Mucosa of descending colon (tissue), 3 donors: ENCODE measurements at regions of chr4 and their contacts with region 1.

Region 1: DNA sequence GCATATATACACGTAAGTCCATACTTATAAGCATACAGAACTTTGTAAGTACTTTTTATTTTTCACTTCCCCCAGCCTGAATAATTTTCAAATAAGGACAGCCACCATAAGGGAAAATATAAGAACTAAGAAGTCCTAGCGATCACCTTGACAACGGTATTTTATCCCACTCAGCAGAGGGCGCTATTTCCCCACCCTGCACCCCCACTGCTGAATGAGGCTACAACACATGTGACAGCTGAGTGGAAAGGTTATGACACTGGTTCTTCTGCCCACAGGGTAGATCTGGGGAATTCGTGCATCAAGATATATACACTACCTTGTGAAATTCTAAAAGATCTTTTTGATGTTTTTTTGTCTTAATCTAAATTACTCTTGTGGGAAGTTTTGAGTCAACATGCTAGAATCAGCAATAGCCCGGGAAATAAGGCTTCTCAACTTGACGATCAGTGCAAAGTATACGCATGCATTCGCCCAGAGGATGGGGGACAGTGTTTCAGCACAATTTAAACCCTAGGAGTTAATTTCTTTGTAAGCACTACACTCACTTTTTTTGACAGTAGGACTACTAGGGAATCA is 151.5 kb downstream of the CORIN start:
- DNase-seq: peak in 2 of 3 donors; percentile 54 to 70
- ATAC-seq: peak; percentile 77
- H3K4me3 ChIP-seq: no peak overlapping the region
- H3K4me1 ChIP-seq: no peaks in the 10 kb centered on the region
- CTCF ChIP-seq: peak; percentile 12

Region 2: DNA sequence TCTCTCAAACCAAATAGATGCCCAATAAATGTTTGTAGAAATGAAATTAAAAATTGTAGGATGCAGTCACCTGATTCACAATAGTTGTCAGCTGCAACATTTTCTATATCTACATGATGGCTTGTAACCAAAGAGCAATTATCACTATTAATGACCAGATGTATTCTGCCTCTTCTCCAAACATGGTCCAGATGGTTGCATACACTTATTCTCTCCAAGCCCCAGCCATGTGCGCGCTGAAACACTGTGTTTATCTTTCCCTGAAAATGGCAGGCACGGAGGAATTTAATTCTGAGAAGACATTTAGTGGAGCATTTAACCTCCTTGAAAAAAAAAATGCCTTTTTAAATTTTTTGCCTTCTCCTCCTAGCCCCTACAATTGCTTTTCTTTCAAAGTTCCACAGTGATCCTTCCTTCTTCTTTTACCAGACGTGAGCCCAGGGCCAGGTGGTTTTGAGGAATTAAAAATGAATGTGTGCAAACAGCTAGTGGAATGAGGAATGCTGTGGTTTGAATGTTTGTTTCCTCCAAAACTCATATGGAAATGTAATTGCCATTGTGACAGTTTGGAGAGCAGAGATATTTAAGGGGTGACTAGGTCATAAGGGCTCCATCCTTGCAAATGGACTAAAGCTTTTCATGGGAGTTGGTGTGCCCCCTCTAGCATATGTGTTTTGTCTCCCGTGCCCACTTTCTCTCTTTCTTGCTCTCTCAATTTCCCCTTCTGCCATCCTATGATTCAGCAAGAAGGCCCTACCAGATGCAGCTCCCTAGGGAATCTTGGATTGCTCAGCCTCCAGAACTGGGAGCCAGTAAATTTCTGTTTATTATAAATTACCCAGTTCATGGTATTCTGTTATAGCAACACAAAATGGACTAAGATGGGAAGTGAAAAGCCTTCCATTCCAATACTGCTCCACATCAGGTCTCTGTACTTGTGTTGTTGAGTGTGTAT is 519.0 kb before region 1 on chr4:
- intact Hi-C with region 1: no loop called
- DNase-seq: no peak
- ATAC-seq: no peak
- H3K4me3 ChIP-seq: no peak overlapping the region
- H3K4me1 ChIP-seq: no peaks in the 10 kb centered on the region
- CTCF ChIP-seq: no peak

Region 3: DNA sequence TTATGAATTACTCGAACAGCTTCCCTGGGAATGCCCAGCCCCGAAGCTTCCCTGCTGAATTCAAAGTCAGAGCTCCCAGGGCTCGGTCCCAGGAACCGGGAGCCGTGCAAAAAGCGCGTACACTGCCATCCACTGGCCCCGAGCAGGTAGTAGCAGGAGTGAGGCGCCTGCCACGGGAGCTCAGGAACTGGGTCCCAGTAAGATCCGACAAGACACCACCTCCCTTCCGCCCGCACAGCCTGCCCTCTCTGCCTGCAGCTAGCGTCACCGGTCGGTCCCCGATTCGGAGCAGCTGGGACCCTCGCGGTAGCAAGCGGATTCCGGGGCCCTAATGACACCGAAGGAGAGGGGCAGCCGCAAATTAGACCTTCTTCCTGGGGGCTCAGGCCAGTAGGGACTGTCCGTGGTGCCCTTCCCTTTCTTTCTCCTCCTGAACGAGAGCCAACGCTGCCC is 150.3 kb after region 1 on chr4:
- intact Hi-C with region 1: loop called in 1 of 2 experiments (anchors 10 kb)
- DNase-seq: peak; percentile 77 to 83 (median 77)
- ATAC-seq: peak; percentile 95
- H3K4me3 ChIP-seq: no peak overlapping the region
- H3K4me1 ChIP-seq: peaks cover 27% of the 10 kb centered on the region
- CTCF ChIP-seq: peak; percentile 26

Region 4: DNA sequence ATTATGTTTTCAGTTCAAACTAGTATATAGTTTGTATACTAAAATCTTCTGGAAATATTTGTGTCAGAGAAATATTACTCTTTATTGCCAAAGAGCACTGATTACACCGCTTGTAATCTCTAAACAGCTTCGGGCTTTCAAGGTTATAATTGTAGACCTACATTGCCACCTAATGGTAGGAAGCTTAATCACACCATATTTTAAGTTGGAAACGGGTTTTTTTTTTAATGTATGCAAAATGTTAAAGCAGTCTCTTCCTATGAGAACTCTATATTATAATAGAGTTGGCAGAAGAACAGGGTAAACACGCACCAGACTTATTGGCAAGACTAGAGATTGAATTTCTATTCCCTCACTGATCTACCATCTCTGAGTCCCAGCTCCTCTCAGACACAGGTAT is 247.5 kb after region 1 on chr4:
- intact Hi-C with region 1: loop called in 1 of 2 experiments (anchors 10 kb)
- DNase-seq: no peak
- ATAC-seq: peak; percentile 66
- H3K4me3 ChIP-seq: no peak overlapping the region
- H3K4me1 ChIP-seq: no peaks in the 10 kb centered on the region
- CTCF ChIP-seq: peak; percentile 35